Common myeloid progenitor, CD34-positive (primary cell): ENCODE measurements at regions of chr4 and their contacts with region 1.

Region 1: GRCh38 chr4:15457406-15458201 is 12.1 kb upstream of the CC2D2A start:
- DNase-seq: peak; percentile 63 to 82 (median 78)
- H3K4me3 ChIP-seq: peak overlapping the region in 4 of 7 experiments; percentile 25 to 67 (median 46)
- H3K27ac ChIP-seq: no peak overlapping the region
- H3K4me1 ChIP-seq: peaks cover 9 to 12% (median 11%) of the 10 kb centered on the region in 4 experiments
- H3K27me3 ChIP-seq: no peaks in the 10 kb centered on the region

Region 2: GRCh38 chr4:15162465-15163283 is 294.9 kb before region 1 on chr4:
- CTCF ChIA-PET with region 1: no interaction called
- POLR2A ChIA-PET with region 1: no interaction called
- DNase-seq: peak; percentile 48 to 70 (median 63)
- H3K4me3 ChIP-seq: no peak overlapping the region
- H3K27ac ChIP-seq: no peak overlapping the region
- H3K4me1 ChIP-seq: peaks cover 0 to 9% (median 0%) of the 10 kb centered on the region in 4 experiments
- H3K27me3 ChIP-seq: no peaks in the 10 kb centered on the region

Region 3: GRCh38 chr4:15231265-15232091 is 226.1 kb before region 1 on chr4:
- CTCF ChIA-PET with region 1: interaction called, 69 read pairs
- POLR2A ChIA-PET with region 1: no interaction called
- DNase-seq: peak; percentile 80 to 85 (median 82)
- H3K4me3 ChIP-seq: no peak overlapping the region
- H3K27ac ChIP-seq: no peak overlapping the region
- H3K4me1 ChIP-seq: peaks cover 8 to 15% (median 11%) of the 10 kb centered on the region in 4 experiments
- H3K27me3 ChIP-seq: no peaks in the 10 kb centered on the region

Region 4: GRCh38 chr4:15238720-15239119 is 218.9 kb before region 1 on chr4:
- CTCF ChIA-PET with region 1: interaction called, 69 read pairs
- POLR2A ChIA-PET with region 1: no interaction called
- DNase-seq: peak; percentile 47 to 70 (median 60)
- H3K4me3 ChIP-seq: no peak overlapping the region
- H3K27ac ChIP-seq: no peak overlapping the region
- H3K4me1 ChIP-seq: peaks cover 0 to 5% (median 4%) of the 10 kb centered on the region in 4 experiments
- H3K27me3 ChIP-seq: no peaks in the 10 kb centered on the region

Region 5: GRCh38 chr4:15396157-15396800 is 61.3 kb before region 1 on chr4:
- CTCF ChIA-PET with region 1: interaction called, 16 read pairs
- POLR2A ChIA-PET with region 1: no interaction called
- DNase-seq: peak; percentile 63 to 77 (median 70)
- H3K4me3 ChIP-seq: no peak overlapping the region
- H3K27ac ChIP-seq: no peak overlapping the region
- H3K4me1 ChIP-seq: peaks cover 10 to 31% (median 27%) of the 10 kb centered on the region in 4 experiments
- H3K27me3 ChIP-seq: no peaks in the 10 kb centered on the region

Region 6: GRCh38 chr4:15405018-15405417 is 52.6 kb before region 1 on chr4:
- CTCF ChIA-PET with region 1: interaction called, 10 read pairs
- POLR2A ChIA-PET with region 1: no interaction called
- DNase-seq: no peak
- H3K4me3 ChIP-seq: no peak overlapping the region
- H3K27ac ChIP-seq: no peak overlapping the region
- H3K4me1 ChIP-seq: peaks cover 13 to 55% (median 32%) of the 10 kb centered on the region in 4 experiments
- H3K27me3 ChIP-seq: no peaks in the 10 kb centered on the region

Region 7: GRCh38 chr4:15469402-15470127 is 12.0 kb after region 1 on chr4 and contains the start of gene CC2D2A:
- CTCF ChIA-PET with region 1: interaction called, 20 read pairs
- POLR2A ChIA-PET with region 1: no interaction called
- DNase-seq: peak in 1 of 3 donors; percentile 15
- H3K4me3 ChIP-seq: peak within 1 kb of the TSS in 6 of 7 experiments; percentile 48 to 76 (median 62)
- H3K27ac ChIP-seq: no peak within 1 kb of the TSS
- H3K4me1 ChIP-seq: peaks cover 5 to 11% (median 8%) of the 10 kb centered on the region in 4 experiments
- H3K27me3 ChIP-seq: no peaks in the 10 kb centered on the region

Region 8: DNA sequence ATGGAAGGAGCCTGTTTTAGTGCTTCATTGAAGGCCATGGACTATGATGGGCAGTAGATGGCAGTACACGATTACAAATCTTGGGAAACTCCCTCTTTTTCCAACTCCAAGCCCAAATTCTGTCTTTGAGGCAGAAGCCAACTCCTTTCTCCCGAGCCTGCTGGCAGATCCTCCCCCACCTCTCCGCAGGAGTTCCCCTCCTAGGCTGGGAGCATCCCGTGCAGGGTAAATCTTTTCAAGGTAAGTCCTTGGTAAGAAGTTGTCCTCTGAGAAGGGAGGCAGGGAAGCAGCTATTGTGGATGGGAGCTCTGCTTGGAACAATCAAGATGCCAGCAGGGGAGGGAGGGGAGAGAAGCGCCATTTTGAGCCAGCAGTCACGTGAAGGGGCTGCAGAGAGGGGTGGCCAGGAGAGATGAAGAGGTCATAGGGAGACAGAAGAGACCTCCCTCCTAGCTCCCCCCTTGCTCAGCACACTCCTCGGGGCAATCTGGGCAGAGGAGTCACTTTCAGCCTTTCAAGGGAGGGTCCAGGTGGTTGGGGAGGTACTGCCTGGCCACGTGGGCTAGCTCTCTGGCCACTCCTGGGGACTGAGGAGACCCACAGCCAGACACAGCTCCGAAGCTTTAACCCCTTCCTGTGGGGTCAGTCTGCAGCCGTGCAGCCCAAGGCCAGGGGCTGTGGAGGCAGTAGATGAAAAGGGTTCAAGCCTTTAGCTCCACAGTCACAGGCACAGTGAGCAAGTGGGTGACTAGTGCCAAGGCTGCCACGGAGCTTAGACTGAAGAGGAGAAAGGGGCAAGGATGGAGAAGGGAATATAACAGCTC is 21.7 kb after region 1 on chr4:
- CTCF ChIA-PET with region 1: interaction called, 13 read pairs
- POLR2A ChIA-PET with region 1: no interaction called
- DNase-seq: peak; percentile 39 to 55 (median 46)
- H3K4me3 ChIP-seq: no peak overlapping the region
- H3K27ac ChIP-seq: no peak overlapping the region
- H3K4me1 ChIP-seq: no peaks in the 10 kb centered on the region
- H3K27me3 ChIP-seq: no peaks in the 10 kb centered on the region

Region 9: GRCh38 chr4:15506464-15506863 is 48.9 kb after region 1 on chr4:
- CTCF ChIA-PET with region 1: no interaction called
- POLR2A ChIA-PET with region 1: no interaction called
- DNase-seq: no peak
- H3K4me3 ChIP-seq: no peak overlapping the region
- H3K27ac ChIP-seq: no peak overlapping the region
- H3K4me1 ChIP-seq: no peaks in the 10 kb centered on the region
- H3K27me3 ChIP-seq: no peaks in the 10 kb centered on the region

Region 10: DNA sequence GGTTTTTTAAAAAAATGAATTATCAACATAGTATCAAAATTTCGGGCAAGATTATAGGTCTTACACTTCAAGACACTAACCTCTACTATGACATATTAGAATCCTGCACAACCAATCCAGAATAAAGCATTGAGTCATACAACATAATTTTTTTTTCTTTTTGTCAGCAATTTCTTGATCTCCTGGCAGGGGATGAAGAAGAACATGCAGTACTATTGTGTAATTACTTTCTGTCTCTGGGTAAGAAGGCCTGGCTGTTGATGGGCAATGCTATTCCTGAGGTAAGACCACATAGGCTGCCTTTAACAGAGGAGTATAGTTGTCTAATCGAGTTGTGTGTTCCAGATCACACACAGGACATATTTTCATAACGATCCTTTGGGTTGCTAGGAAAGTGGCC is 130.0 kb after region 1 on chr4:
- CTCF ChIA-PET with region 1: no interaction called
- POLR2A ChIA-PET with region 1: no interaction called
- DNase-seq: no peak
- H3K4me3 ChIP-seq: no peak overlapping the region
- H3K27ac ChIP-seq: no peak overlapping the region
- H3K4me1 ChIP-seq: no peaks in the 10 kb centered on the region
- H3K27me3 ChIP-seq: no peaks in the 10 kb centered on the region